ENCODE measurements at regions of chr10 and their contacts with region 1.

Region 1: DNA sequence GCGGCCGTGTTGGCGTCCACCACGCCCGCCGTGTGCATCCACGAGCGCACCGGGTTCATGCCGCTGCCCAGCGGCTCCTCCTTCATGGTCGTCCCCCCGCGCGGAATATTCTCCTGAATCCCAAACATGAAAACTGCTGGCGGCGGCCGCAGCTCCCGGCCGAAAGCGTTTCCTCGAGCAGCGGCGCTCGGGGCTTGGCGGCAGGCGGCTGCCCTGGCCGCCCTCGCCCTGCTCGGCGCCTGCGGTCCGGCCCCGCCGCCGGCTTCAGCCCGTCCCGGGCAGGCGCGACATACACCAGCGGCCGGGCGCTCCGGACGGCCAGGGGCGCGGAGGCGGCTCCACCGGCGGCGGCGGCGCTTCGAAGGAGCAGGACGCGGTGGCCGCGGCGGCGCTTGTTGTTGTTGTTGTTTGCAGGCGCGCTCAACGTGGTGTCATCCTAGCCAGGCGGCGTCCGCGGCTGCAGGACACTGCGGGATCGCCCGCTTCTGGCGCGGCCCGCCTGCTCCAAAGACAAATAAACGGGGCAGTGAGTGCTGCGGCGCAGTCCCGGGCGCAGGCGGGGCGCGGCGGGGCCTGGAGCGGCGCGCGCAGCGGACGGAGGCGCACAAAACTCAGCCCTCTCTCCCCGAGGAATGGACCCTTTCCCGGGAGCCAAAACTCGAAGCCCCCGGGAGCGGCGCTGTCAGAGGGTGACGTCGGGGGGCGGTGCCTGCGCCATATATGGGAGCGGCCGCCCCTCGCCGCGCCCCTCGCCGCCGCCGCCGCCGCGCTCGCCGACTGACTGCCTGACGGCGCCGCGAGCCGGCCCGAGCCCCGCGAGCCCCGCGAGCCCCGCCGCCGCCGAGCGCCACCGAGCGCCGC is at the start of gene EBF3:
- DNase-seq: peak; percentile 48
- H3K4me3 ChIP-seq: peak within 1 kb of the TSS; percentile 35 to 59 (median 38)
- H3K27ac ChIP-seq: peak within 1 kb of the TSS; percentile 21
- H3K4me1 ChIP-seq: peaks cover 9% of the 10 kb centered on the region
- H3K27me3 ChIP-seq: peaks cover 67 to 89% of the 10 kb centered on the region in 2 experiments
- CTCF ChIP-seq: no peak
- POLR2A ChIP-seq: no peak
- total RNA-seq, gene EBF3: 2.0 and 2.7 TPM in 2 replicates

Region 2: DNA sequence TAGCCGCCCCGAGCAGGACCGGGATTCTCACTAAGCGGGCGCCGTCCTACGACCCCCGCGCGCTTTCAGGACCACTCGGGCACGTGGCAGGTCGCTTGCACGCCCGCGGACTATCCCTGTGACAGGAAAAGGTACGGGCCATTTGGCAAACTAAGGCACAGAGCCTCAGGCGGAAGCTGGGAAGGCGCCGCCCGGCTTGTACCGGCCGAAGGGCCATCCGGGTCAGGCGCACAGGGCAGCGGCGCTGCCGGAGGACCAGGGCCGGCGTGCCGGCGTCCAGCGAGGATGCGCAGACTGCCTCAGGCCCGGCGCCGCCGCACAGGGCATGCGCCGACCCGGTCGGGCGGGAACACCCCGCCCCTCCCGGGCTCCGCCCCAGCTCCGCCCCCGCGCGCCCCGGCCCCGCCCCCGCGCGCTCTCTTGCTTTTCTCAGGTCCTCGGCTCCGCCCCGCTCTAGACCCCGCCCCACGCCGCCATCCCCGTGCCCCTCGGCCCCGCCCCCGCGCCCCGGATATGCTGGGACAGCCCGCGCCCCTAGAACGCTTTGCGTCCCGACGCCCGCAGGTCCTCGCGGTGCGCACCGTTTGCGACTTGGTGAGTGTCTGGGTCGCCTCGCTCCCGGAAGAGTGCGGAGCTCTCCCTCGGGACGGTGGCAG is 497.0 kb before region 1 on chr10 and contains the start of gene MGMT:
- CTCF ChIA-PET with region 1: no interaction called
- POLR2A ChIA-PET with region 1: no interaction called
- dilution Hi-C with region 1: no loop called
- intact Hi-C with region 1: loop called (anchors 5 kb)
- DNase-seq: peak; percentile 50
- H3K4me3 ChIP-seq: peak within 1 kb of the TSS; percentile 34 to 64 (median 63)
- H3K27ac ChIP-seq: peak within 1 kb of the TSS; percentile 25
- H3K4me1 ChIP-seq: peaks cover 10% of the 10 kb centered on the region
- H3K27me3 ChIP-seq: no peaks in the 10 kb centered on the region
- CTCF ChIP-seq: no peak
- POLR2A ChIP-seq: peak; percentile 61
- total RNA-seq, gene MGMT: 11.1 and 15.0 TPM in 2 replicates

Region 3: GRCh38 chr10:129785536-129785981 is 178.3 kb before region 1 on chr10:
- CTCF ChIA-PET with region 1: no interaction called
- POLR2A ChIA-PET with region 1: no interaction called
- dilution Hi-C with region 1: no loop called
- intact Hi-C with region 1: no loop called
- DNase-seq: no peak
- H3K4me3 ChIP-seq: no peak overlapping the region
- H3K27ac ChIP-seq: no peak overlapping the region
- H3K4me1 ChIP-seq: no peaks in the 10 kb centered on the region
- H3K27me3 ChIP-seq: no peaks in the 10 kb centered on the region
- CTCF ChIP-seq: no peak
- POLR2A ChIP-seq: no peak

Region 4: GRCh38 chr10:129949891-129950291 is 14.0 kb before region 1 on chr10:
- CTCF ChIA-PET with region 1: no interaction called
- POLR2A ChIA-PET with region 1: no interaction called
- dilution Hi-C with region 1: no loop called
- intact Hi-C with region 1: loop called (anchors 1 kb)
- DNase-seq: no peak
- H3K4me3 ChIP-seq: no peak overlapping the region
- H3K27ac ChIP-seq: peak overlapping the region; percentile 20
- H3K4me1 ChIP-seq: peaks cover 4% of the 10 kb centered on the region
- H3K27me3 ChIP-seq: no peaks in the 10 kb centered on the region
- CTCF ChIP-seq: no peak
- POLR2A ChIP-seq: no peak

Region 5: GRCh38 chr10:130179640-130180039 is 215.8 kb after region 1 on chr10:
- CTCF ChIA-PET with region 1: no interaction called
- POLR2A ChIA-PET with region 1: no interaction called
- dilution Hi-C with region 1: no loop called
- intact Hi-C with region 1: no loop called
- DNase-seq: peak; percentile 82
- H3K4me3 ChIP-seq: no peak overlapping the region
- H3K27ac ChIP-seq: no peak overlapping the region
- H3K4me1 ChIP-seq: no peaks in the 10 kb centered on the region
- H3K27me3 ChIP-seq: no peaks in the 10 kb centered on the region
- CTCF ChIP-seq: peak; percentile 38 to 46
- POLR2A ChIP-seq: no peak

Region 6: DNA sequence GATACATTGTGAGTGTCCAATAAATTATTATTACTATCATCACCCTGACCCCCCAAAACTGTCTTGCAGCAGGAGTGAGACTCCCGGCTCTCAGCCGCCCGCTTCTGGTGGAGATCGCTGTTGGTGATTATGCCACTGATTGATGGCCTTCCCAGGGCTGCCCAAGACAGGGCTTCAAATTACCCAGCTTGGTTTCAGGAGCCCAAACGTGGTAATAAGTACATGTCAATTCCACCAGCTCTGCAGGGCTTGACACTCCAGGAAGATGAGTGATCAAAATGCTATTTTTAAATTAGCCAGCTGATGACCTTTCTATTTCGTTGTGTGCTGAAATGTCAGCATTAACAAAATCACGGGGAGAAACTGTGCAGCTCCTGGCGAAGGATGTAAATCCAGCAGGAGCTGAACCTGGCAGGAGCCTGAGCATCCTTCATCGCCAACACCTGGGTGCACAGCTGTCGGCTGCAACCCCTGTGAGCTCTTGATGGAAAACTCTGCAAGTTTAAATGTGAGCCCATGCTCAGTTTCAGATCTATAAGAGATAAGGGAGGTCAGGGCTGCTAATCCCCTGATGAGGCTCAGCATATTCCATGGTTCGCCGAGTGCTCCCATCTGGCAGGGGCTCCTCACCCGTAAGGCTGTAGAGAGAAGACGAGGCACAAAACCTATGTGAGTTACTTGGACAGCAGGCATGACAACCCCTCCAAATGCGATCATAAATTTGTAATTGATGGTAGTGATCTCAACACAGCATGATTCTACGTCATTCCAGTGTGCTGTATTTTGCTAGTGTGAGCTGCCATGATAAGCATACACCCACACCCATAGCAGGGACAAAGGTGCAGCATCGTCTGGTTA is 901.3 kb after region 1 on chr10:
- CTCF ChIA-PET with region 1: no interaction called
- POLR2A ChIA-PET with region 1: no interaction called
- dilution Hi-C with region 1: no loop called
- intact Hi-C with region 1: no loop called
- DNase-seq: no peak
- H3K4me3 ChIP-seq: no peak overlapping the region
- H3K27ac ChIP-seq: no peak overlapping the region
- H3K4me1 ChIP-seq: no peaks in the 10 kb centered on the region
- H3K27me3 ChIP-seq: no peaks in the 10 kb centered on the region
- CTCF ChIP-seq: no peak
- POLR2A ChIP-seq: no peak

Measured in endothelial cell of umbilical vein (primary cell).